ENCODE measurements at regions of chr2 and their contacts with region 1.

Region 1: DNA sequence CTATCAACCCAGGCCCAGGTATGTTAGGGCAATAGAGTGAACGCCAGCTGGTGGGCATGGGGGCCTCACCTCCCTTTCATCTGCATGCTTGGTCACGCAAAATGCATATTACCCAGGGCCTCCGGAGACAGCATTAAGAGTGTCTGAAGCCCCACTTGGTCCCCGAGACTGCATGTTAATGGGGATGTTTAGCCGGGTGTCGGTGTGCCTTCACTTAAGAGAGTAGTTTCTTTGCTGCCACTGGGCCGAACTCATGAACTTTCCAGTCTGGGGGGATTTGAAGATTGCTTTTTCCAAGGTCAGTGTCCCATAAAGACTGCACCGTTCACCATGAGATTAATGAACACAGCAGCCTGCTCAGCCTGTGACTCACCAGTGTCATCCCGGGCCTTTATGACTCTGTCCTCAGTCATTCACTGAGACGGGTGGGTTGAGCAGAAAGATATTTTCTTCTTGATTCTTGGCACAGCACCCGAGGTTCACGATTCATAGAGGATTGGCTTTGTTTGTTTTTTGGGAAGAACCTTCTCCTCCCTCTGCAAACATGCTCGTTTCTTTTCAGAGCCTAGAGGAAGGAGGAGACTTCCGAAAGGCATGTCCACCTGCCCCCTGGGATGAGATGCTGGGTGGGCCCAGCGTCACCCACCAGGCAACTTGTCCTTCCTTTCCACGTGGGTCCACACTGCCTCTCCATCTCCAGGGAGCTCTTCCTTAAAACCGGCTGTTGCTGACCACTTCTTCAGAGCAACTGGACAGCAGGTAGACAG is 199.1 kb downstream of the GLI2 start:
- DNase-seq: peak in 1 of 2 donors; percentile 76
- H3K4me3 ChIP-seq: no peak overlapping the region
- H3K27ac ChIP-seq: peak overlapping the region; percentile 52 to 76
- H3K4me1 ChIP-seq: peaks cover 24 to 54% of the 10 kb centered on the region in 2 donors
- H3K27me3 ChIP-seq: no peaks in the 10 kb centered on the region
- CTCF ChIP-seq: no peak

Region 2: DNA sequence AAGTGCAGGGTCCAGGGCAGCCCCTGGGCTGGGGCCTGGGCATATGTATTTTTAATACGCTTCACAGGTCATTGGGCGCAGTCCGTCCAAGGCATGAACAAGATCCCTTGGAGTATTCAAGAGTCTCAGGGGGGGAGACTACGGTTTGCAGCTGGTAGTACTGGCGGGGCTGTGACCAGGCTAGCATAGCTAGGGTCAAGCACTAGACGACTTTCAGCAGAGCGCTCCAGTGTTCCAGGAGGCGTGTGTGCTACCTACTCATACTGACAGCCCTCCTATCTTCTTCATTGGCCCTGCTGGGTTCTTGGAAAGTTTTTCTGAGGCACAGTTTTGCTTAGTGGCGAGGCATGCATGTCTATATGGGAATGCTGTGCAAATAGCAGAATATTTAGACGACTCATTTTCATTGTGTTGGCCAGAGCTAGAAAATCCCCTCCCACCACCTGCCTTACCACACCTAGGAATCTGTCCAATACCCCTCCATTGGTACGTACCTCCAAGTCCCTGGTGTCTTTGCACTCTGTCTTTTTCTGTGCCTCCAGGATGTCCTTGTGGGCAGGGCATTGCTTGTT is 130.9 kb before region 1 on chr2:
- intact Hi-C with region 1: loop called (anchors 1 kb)
- DNase-seq: no peak
- H3K4me3 ChIP-seq: no peak overlapping the region
- H3K27ac ChIP-seq: peak overlapping the region; percentile 71 to 81
- H3K4me1 ChIP-seq: peaks cover 17 to 37% of the 10 kb centered on the region in 2 donors
- H3K27me3 ChIP-seq: no peaks in the 10 kb centered on the region
- CTCF ChIP-seq: no peak

Region 3: GRCh38 chr2:120904830-120905234 is 29.9 kb before region 1 on chr2:
- intact Hi-C with region 1: loop called (anchors 5 kb)
- DNase-seq: no peak
- H3K4me3 ChIP-seq: no peak overlapping the region
- H3K27ac ChIP-seq: peak overlapping the region; percentile 66 to 75
- H3K4me1 ChIP-seq: peaks cover 7 to 20% of the 10 kb centered on the region in 2 donors
- H3K27me3 ChIP-seq: no peaks in the 10 kb centered on the region
- CTCF ChIP-seq: no peak